AG04449 (cell line): ENCODE measurements at regions of chr11 and their contacts with region 1.

Region 1: GRCh38 chr11:72585762-72586311 is 88.4 kb downstream of the PDE2A start:
- DNase-seq: no peak
- H3K4me3 ChIP-seq: no peak overlapping the region
- CTCF ChIP-seq: peak; percentile 79

Region 2: DNA sequence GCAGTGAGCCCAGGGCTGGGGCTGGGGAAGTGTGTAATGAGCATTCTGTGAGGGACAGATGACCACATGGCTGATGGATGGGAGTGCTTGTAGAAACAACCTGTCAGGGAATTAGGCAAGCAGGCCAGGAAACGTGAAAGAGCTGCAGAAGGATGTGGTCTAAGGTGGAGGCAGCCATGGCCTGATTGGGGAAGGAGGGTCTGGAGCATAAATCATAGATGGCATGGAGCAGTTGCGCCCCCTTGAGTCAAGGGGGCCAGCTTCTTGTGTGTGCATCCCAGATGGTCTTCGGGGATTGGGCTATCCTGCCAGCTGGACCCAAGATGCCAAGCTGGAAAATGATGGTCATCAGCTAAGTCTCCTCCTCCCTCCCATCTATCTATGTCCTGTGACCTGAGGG is 32.1 kb before region 1 on chr11:
- CTCF ChIA-PET with region 1: interaction called, 13 read pairs
- POLR2A ChIA-PET with region 1: no interaction called
- DNase-seq: no peak
- H3K4me3 ChIP-seq: no peak overlapping the region
- CTCF ChIP-seq: no peak

Region 3: GRCh38 chr11:72598906-72599305 is 13.1 kb after region 1 on chr11:
- CTCF ChIA-PET with region 1: interaction called, 87 read pairs
- POLR2A ChIA-PET with region 1: no interaction called
- DNase-seq: no peak
- H3K4me3 ChIP-seq: no peak overlapping the region
- CTCF ChIP-seq: peak; percentile 47

Region 4: DNA sequence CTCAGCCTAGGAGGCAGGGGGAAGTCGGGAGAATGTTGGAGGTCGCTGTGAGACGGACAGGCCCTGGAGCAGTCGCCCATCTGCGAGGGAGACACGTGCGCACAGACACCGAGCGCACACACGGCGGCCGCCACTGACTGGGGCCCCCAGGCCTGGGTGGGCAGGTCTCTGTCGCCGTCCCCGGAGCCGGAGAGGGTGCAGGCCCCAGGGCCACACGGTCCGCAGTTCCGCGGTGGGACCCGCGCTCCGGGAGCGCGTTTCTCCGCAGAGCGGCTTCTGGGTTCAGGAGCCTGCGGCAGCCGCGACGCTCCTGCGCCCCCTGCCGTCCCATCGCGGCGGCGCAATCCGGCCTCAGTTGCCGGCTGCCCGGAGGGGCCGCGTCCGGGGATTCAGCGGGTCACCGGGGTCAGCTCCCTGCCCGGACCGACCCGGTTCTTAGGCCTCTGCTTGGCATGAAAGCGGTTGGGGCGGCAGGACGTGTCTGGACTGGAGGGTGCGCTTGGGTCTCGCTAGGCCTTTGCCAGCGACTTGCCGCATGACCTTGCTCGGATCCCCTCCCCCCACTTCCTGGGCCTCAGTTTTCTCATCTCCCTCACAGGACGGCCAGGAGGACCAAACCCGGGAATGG is 57.2 kb after region 1 on chr11:
- CTCF ChIA-PET with region 1: interaction called, 55 read pairs
- POLR2A ChIA-PET with region 1: no interaction called
- DNase-seq: no peak
- H3K4me3 ChIP-seq: peak overlapping the region; percentile 52
- CTCF ChIP-seq: peak; percentile 93